ENCODE measurements at regions of chr11 and their contacts with region 1.

Region 1: GRCh38 chr11:35617687-35618496 is at the start of gene FJX1:
- DNase-seq: peak; percentile 49 to 57 (median 55)
- ATAC-seq: peak; percentile 49 to 64 (median 58)
- H3K4me3 ChIP-seq: peak within 1 kb of the TSS; percentile 39 to 60 (median 45)
- H3K27ac ChIP-seq: peak within 1 kb of the TSS; percentile 41 to 83 (median 45)
- H3K4me1 ChIP-seq: peaks cover 0 to 22% (median 4%) of the 10 kb centered on the region in 4 donors
- H3K27me3 ChIP-seq: peaks cover 0 to 5% of the 10 kb centered on the region in 2 donors
- CTCF ChIP-seq: no peak
- POLR2A ChIP-seq: no peak
- total RNA-seq, gene FJX1: 0.79 to 4.2 (median 1.3) TPM

Region 2: DNA sequence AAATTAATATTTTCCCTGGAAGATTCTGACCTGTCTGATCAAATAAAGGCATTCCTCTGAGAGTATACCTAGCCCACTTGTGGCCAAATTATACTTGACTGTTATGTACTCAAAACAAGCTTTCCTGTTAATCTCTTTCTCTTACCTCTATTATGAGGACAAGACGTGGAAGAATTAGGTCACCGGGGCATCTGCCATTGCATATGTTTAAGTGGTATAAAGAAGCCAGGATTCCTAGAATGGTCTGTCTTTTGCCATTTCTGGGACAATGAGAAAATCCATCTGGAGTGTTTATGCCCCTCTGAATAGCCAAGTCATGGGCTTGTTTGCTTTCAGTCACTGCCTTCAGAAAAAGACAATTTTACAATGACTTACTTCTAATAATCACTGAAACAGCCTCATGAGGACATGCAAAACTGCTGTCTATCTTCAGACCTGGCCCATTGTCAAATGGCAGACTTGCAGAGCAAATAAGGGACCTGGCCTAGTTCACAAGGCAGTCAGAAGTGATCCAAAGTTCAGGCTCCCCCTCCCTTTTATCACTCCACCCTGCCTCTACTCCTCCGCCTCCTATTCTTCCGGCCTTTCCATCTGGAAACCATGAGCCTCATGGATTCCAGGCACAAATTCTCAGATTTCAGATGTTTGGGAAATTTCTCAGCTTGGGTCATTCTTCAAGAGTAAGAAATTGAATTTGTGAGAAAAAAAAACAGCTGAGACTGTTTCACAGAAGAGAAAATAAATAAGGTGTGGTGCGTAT is 197.8 kb after region 1 on chr11:
- intact Hi-C with region 1: loop called (anchors 5 to 10 kb)
- DNase-seq: peak in 1 of 3 donors; percentile 79
- ATAC-seq: peak; percentile 72 to 90 (median 82)
- H3K4me3 ChIP-seq: no peak overlapping the region
- H3K27ac ChIP-seq: peak overlapping the region in 1 of 3 donors; percentile 70
- H3K4me1 ChIP-seq: peaks cover 0 to 53% (median 14%) of the 10 kb centered on the region in 4 donors
- H3K27me3 ChIP-seq: no peaks in the 10 kb centered on the region
- CTCF ChIP-seq: no peak
- POLR2A ChIP-seq: no peak

Region 3: GRCh38 chr11:35822815-35823495 is 205.1 kb after region 1 on chr11:
- intact Hi-C with region 1: loop called (anchors 5 to 10 kb)
- DNase-seq: no peak
- ATAC-seq: no peak
- H3K4me3 ChIP-seq: no peak overlapping the region
- H3K27ac ChIP-seq: no peak overlapping the region
- H3K4me1 ChIP-seq: peaks cover 0 to 30% (median 0%) of the 10 kb centered on the region in 4 donors
- H3K27me3 ChIP-seq: no peaks in the 10 kb centered on the region
- CTCF ChIP-seq: no peak
- POLR2A ChIP-seq: no peak

Region 4: DNA sequence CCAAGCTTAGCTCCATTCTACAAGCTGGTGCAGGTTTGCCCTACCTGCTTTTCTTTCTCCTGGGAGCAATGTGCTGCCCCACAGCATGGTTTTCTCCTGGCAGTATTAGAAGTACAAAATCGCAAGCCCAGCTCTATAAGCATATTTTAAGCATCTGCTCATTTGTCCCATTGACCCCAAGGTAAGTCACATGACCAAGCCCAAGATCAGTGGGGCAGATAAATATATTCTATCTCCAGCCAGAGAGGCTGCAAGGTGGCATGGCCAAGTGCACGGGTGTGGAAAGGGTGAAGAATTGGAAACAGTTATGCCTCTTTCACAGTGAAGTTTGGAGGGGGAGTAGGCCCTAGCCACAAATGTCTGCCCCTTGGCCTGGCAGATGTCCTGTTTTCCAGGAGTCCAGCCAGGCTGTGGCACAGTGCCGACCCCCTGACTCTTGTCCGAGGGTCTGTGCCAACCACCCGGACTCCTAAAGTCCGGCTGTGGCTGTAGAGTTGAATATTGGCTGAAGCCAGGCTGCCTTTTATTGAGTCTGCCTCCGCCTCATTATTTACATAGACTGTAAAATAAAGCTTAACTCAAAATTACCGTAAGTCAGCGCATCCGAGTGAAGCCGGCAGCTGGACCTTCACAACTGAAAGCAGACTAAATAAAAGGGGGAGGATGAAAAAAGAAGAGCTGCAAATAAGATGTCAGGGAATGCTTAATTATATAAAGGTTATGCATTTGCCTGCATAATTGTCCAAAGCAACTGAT is 505.6 kb after region 1 on chr11:
- intact Hi-C with region 1: loop called in 1 of 2 experiments (anchors 10 kb)
- DNase-seq: no peak
- ATAC-seq: no peak
- H3K4me3 ChIP-seq: no peak overlapping the region
- H3K27ac ChIP-seq: no peak overlapping the region
- H3K4me1 ChIP-seq: peaks cover 0 to 3% (median 0%) of the 10 kb centered on the region in 4 donors
- H3K27me3 ChIP-seq: no peaks in the 10 kb centered on the region
- CTCF ChIP-seq: no peak
- POLR2A ChIP-seq: no peak

Region 5: DNA sequence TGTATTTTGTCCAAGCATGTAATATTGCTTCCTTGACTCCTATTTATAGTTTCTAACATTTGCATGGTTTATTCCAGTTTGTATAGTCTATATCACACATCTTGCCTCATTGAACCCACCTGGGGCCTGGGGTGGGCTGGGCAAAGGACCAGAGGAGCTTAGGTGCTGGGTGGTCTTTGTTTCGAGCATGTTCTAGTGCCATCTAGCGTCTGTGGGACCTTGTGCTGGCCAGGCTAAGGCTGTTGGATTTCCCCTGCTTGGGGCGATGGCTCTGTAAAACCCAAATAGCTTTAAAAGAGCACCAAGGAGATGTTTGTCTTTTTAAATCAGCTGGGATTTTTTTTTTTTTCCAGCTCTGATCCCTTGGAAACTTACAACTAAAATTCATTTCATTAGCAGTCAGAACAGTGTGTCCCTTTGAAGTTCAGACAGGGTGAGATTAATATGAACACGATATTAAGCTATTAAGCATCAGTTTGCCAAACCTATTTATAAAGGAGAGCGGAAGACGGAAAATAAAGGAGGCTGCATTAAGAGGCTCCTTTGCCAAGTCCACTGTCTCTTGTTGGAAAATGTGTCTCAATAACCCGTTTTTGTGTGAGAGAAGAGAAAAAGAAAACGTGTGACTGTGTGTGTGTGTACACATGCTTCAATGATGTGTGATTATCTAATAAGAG is 514.0 kb after region 1 on chr11:
- intact Hi-C with region 1: loop called (anchors 10 kb)
- DNase-seq: peak in 2 of 3 donors; percentile 41 to 49
- ATAC-seq: peak; percentile 75 to 88 (median 78)
- H3K4me3 ChIP-seq: no peak overlapping the region
- H3K27ac ChIP-seq: no peak overlapping the region
- H3K4me1 ChIP-seq: peaks cover 0 to 3% (median 0%) of the 10 kb centered on the region in 4 donors
- H3K27me3 ChIP-seq: no peaks in the 10 kb centered on the region
- CTCF ChIP-seq: peak; percentile 42 to 64 (median 60)
- POLR2A ChIP-seq: no peak

Region 6: DNA sequence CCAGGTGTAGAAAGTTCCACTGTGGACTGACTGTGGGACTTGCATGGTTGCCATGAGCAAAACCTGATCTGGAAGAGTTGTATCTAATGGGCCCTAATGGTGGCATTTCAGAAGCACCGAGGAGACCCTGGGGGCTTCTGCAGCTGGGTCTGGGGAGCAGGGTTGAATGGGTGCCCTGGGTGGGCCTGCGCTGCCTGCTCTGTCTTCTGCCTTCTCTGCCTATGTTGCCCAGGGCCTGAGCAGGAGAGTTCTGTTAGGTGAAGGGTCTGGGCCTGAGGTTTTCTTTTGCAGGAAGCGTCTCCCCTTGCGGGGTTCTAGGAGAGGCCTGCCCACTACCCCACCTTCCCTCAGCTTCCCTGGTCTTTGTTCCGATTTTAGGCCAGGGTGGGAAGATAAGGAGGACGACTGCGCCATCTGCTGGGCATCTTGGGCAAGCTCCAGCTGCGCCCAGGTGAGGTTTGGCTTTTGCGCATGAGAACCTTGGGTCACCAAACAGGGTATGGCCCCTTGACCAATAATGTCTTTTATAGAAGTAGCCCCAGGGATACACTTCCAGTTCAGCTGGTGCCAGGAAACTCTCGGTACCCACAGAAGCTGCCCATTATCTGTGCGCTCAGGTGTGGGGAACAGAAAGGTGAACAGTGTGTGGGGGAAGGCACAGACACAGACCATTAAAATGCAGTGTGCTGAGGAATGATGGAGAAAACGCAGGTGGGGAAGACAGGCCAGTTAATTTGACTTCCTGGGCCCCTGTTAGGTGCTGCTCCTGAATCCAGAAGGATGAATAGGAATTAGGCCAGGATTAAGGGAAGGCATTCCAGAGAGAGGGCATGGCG is 648.1 kb after region 1 on chr11:
- intact Hi-C with region 1: loop called in 1 of 2 experiments (anchors 10 kb)
- DNase-seq: peak; percentile 58 to 65 (median 63)
- ATAC-seq: peak; percentile 66 to 73 (median 72)
- H3K4me3 ChIP-seq: no peak overlapping the region
- H3K27ac ChIP-seq: no peak overlapping the region
- H3K4me1 ChIP-seq: peaks cover 0 to 30% (median 9%) of the 10 kb centered on the region in 4 donors
- H3K27me3 ChIP-seq: no peaks in the 10 kb centered on the region
- CTCF ChIP-seq: peak; percentile 70 to 88 (median 74)
- POLR2A ChIP-seq: no peak